ENCODE measurements at regions of chr12 and their contacts with region 1.

Region 1: GRCh38 chr12:132986001-132986912 is at the start of gene ZNF26:
- DNase-seq: peak; percentile 86 to 87 (median 86)
- H3K4me3 ChIP-seq: peak within 1 kb of the TSS; percentile 54 to 87 (median 74)
- H3K4me3 Mint-ChIP-seq: peak within 1 kb of the TSS; percentile 89 to 95
- H3K27ac ChIP-seq: peak within 1 kb of the TSS; percentile 54 to 89
- H3K27ac Mint-ChIP-seq: peak within 1 kb of the TSS; percentile 85 to 95 (median 92)
- H3K4me1 ChIP-seq: peaks cover 17 to 24% of the 10 kb centered on the region in 2 donors
- H3K4me1 Mint-ChIP-seq: peaks cover 14% of the 10 kb centered on the region
- H3K27me3 ChIP-seq: no peaks in the 10 kb centered on the region
- H3K27me3 Mint-ChIP-seq: peaks cover 0 to 2% (median 0%) of the 10 kb centered on the region in 3 donors
- CTCF ChIP-seq: no peak
- polyA plus RNA-seq, gene ZNF26: 3.3 to 17.6 (median 3.8) TPM

Region 2: GRCh38 chr12:132886529-132887505 is 99.4 kb before region 1 on chr12:
- intact Hi-C with region 1: no loop called
- DNase-seq: peak in 2 of 3 donors; percentile 12 to 30
- H3K4me3 ChIP-seq: peak overlapping the region; percentile 54 to 92 (median 86)
- H3K4me3 Mint-ChIP-seq: peak overlapping the region; percentile 85 to 97
- H3K27ac ChIP-seq: peak overlapping the region in 1 of 2 donors; percentile 84
- H3K27ac Mint-ChIP-seq: peak overlapping the region; percentile 75 to 100 (median 99)
- H3K4me1 ChIP-seq: peaks cover 10 to 15% of the 10 kb centered on the region in 2 donors
- H3K4me1 Mint-ChIP-seq: peaks cover 23% of the 10 kb centered on the region
- H3K27me3 ChIP-seq: no peaks in the 10 kb centered on the region
- H3K27me3 Mint-ChIP-seq: peaks cover 3 to 10% (median 8%) of the 10 kb centered on the region in 3 donors
- CTCF ChIP-seq: no peak

Region 3: GRCh38 chr12:132921685-132922084 is 64.6 kb before region 1 on chr12:
- intact Hi-C with region 1: no loop called
- DNase-seq: no peak
- H3K4me3 ChIP-seq: peak overlapping the region in 1 of 3 experiments; percentile 23
- H3K4me3 Mint-ChIP-seq: no peak overlapping the region
- H3K27ac ChIP-seq: no peak overlapping the region
- H3K27ac Mint-ChIP-seq: no peak overlapping the region
- H3K4me1 ChIP-seq: no peaks in the 10 kb centered on the region
- H3K4me1 Mint-ChIP-seq: no peaks in the 10 kb centered on the region
- H3K27me3 ChIP-seq: no peaks in the 10 kb centered on the region
- H3K27me3 Mint-ChIP-seq: peaks cover 0 to 2% (median 0%) of the 10 kb centered on the region in 3 donors
- CTCF ChIP-seq: no peak

Region 4: GRCh38 chr12:132956011-132956788 is 30.1 kb before region 1 on chr12 and contains the start of gene ZNF605:
- intact Hi-C with region 1: loop called in 1 of 2 experiments (anchors 2 kb)
- DNase-seq: peak; percentile 64 to 80 (median 69)
- H3K4me3 ChIP-seq: peak within 1 kb of the TSS; percentile 62 to 95 (median 94)
- H3K4me3 Mint-ChIP-seq: peak within 1 kb of the TSS; percentile 92
- H3K27ac ChIP-seq: peak within 1 kb of the TSS; percentile 36 to 76
- H3K27ac Mint-ChIP-seq: peak within 1 kb of the TSS; percentile 25 to 91 (median 82)
- H3K4me1 ChIP-seq: peaks cover 12 to 15% of the 10 kb centered on the region in 2 donors
- H3K4me1 Mint-ChIP-seq: peaks cover 19% of the 10 kb centered on the region
- H3K27me3 ChIP-seq: no peaks in the 10 kb centered on the region
- H3K27me3 Mint-ChIP-seq: peaks cover 0 to 3% (median 0%) of the 10 kb centered on the region in 3 donors
- CTCF ChIP-seq: no peak
- polyA plus RNA-seq, gene ZNF605: 0.32 to 1.9 (median 0.80) TPM

Region 5: GRCh38 chr12:133130038-133130807 is 144.0 kb after region 1 on chr12 and contains the starts of genes ZNF10 and ZNF891:
- intact Hi-C with region 1: loop called in 1 of 2 experiments (anchors 1 kb)
- DNase-seq: peak; percentile 81 to 93 (median 87)
- H3K4me3 ChIP-seq: peak within 1 kb of the TSS; percentile 55 to 74 (median 72)
- H3K4me3 Mint-ChIP-seq: peak within 1 kb of the TSS; percentile 86 to 92
- H3K27ac ChIP-seq: peak within 1 kb of the TSS; percentile 83 to 88
- H3K27ac Mint-ChIP-seq: peak within 1 kb of the TSS; percentile 88 to 97 (median 95)
- H3K4me1 ChIP-seq: peaks cover 14% of the 10 kb centered on the region in 2 donors
- H3K4me1 Mint-ChIP-seq: peaks cover 15% of the 10 kb centered on the region
- H3K27me3 ChIP-seq: no peaks in the 10 kb centered on the region
- H3K27me3 Mint-ChIP-seq: peaks cover 0 to 3% (median 1%) of the 10 kb centered on the region in 3 donors
- CTCF ChIP-seq: no peak
- polyA plus RNA-seq, gene ZNF10: 0.68 to 1.00 (median 0.79) TPM
- polyA plus RNA-seq, gene ZNF891: 0.08 to 0.45 (median 0.18) TPM

Region 6: GRCh38 chr12:133181238-133181959 is 195.1 kb after region 1 on chr12 and contains the start of gene ZNF268:
- intact Hi-C with region 1: loop called in 1 of 2 experiments (anchors 1 kb)
- DNase-seq: peak; percentile 88 to 90 (median 89)
- H3K4me3 ChIP-seq: peak within 1 kb of the TSS; percentile 65 to 94 (median 87)
- H3K4me3 Mint-ChIP-seq: peak within 1 kb of the TSS; percentile 92 to 96
- H3K27ac ChIP-seq: peak within 1 kb of the TSS; percentile 62 to 91
- H3K27ac Mint-ChIP-seq: peak within 1 kb of the TSS; percentile 87 to 93 (median 93)
- H3K4me1 ChIP-seq: peaks cover 7% of the 10 kb centered on the region in 2 donors
- H3K4me1 Mint-ChIP-seq: peaks cover 10% of the 10 kb centered on the region
- H3K27me3 ChIP-seq: no peaks in the 10 kb centered on the region
- H3K27me3 Mint-ChIP-seq: peaks cover 0 to 2% (median 0%) of the 10 kb centered on the region in 3 donors
- CTCF ChIP-seq: peak; percentile 80
- polyA plus RNA-seq, gene ZNF268: 3.3 to 6.0 (median 5.8) TPM

Measured in CD14-positive monocyte (primary cell).